Cardiac septum (tissue), 1 donor: ENCODE measurements at regions of chr18 and their contacts with region 1.

Region 1: DNA sequence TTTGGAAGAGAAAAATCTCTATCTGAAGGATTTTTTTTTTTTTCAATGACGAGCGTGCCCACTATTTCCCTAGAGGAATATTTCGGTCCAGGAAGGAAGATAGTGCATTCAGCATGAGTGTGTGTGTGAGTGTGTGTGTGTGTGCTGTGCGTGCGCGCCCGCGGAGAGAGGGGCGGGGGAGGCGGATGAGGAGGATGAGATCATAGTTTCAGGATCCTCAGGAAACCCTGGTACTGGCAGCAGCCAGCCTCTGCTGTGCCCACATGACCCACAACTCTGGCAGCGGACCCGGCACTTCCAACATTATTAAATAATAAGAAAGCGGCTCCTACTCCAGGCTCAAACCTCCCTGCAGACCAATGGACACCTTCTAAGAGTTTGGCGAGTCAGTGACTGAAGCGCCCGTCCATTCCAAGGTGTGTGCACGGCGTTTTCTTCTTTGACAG is 217.0 kb upstream of the DTNA start:
- DNase-seq: peak; percentile 85

Region 2: GRCh38 chr18:34592961-34593382 is 99.8 kb after region 1 on chr18:
- intact Hi-C with region 1: loop called (anchors 1 kb)
- DNase-seq: peak; percentile 81